ENCODE measurements at regions of chr6 and their contacts with region 1.

Region 1: DNA sequence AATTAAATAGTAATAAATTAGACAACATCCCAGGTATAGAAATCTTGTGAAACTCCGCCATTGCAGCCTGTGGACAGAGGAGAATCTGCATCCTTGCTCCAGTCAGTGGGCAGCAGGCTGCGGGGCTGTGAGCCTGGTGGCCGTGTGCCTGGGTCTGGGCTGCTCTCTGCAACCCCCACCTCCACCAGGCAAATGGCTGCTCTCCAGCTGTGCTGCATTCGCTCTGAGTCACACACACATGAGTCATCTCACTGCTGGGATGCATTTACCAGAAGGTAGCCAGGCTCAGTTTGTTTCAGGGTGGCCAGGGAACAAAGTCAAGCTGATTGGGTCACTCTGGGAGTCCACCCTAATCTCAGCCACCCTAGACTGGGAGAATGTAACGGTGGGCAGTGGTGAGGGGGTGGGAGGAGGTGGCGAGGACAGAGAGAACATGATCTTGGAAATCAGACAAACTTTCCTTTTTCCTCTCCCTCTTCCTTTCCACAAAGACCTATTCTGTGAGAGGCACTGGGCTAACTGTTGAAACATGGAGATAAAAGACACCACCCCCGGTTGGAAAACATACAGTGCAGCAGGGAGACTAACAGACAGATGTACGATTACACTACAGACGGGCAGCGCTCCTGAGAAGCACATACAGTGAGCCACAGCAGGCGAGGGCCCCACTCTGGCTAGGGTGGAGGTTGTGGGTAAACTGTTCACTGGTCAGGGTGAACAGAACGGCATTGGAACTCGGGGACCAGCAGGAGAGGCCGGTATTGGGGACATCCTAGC is 59.2 kb downstream of the TRAM2 start:
- DNase-seq: peak; percentile 94

Region 2: DNA sequence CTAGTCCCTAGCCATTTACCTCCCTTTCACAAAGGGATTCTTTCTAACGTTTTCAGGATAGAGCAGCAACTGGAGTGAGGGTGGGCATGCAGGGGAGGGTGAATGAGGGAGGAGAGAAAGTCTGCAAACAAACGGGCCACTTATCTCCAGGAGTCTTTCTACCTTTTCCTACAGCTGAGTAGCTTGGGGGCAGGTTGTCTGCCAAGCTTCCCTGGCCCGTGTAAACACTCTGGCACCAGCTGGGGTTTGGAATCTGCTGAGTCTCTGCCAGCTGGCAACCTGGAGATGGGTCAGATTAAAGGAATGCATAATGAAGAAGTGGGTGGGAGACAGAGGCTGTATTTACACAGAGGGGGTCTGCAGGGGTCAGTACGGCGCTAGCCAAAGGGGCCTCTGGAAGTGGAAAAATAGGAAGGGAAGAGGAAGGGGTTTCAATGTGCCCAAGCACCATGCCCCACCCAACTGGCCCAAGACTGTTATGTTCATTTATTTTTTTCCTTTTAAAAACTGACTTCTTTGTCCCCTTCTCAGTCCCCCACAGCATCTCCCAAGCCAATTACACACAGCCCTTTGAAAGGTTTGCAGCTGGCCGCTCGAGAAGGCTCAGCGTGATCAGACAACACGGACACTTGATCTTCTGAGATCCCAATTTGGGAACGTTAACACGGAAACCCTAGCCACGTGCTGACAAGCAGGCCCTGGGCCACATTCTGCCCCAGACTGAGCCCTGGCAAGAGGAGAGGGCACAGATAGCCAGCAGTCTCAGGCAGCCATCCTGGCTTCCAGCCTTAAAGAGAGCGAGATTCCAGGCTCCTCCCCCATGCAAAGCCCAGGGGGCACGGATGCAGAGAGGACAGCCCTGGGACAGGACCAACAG is 33.9 kb after region 1 on chr6:
- intact Hi-C with region 1: loop called (anchors 5 kb)
- DNase-seq: peak; percentile 79

Region 3: DNA sequence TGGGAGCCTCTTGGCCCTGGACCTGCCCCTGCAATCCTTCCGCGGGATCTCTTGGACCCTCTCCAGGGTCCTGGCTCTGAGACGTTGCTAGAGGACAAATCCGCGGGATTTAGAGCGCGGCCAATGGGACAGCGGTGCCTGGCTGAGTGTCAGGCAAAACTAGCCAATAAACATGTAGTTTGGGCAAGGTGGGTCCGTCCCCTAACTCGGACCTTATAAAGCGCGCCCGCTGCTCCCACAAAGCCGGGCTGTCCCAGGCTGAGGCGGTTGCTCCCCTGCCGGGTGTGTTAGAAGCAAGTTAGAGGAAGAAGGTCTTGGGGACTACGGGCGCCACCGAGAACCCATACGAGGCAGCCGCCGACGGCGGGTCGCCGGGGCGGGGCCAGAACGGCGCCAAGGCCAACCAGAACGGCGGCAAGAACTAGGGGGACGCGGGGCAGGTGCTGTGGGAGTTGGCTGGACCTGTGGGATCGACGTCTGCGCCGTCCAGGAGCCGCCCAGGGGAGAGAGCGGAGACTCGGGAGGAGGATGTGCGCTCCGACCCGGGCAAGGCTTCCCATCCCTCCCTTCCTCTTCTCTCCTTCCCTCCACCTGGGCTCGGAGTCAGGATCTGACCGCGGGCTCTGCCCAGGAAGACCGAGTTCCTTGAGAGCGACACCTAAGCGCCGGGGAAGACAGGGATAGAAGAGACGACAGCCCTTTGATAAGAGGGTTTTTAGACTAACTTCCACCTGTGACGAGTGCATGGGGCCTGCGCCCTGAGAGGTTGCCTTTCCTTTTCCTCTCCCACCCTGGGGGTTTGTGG is 146.7 kb after region 1 on chr6:
- intact Hi-C with region 1: loop called (anchors 5 kb)
- DNase-seq: peak; percentile 94

Measured in cardiac septum (tissue), 1 donor.